ENCODE measurements at regions of chr10 and their contacts with region 1.

Region 1: DNA sequence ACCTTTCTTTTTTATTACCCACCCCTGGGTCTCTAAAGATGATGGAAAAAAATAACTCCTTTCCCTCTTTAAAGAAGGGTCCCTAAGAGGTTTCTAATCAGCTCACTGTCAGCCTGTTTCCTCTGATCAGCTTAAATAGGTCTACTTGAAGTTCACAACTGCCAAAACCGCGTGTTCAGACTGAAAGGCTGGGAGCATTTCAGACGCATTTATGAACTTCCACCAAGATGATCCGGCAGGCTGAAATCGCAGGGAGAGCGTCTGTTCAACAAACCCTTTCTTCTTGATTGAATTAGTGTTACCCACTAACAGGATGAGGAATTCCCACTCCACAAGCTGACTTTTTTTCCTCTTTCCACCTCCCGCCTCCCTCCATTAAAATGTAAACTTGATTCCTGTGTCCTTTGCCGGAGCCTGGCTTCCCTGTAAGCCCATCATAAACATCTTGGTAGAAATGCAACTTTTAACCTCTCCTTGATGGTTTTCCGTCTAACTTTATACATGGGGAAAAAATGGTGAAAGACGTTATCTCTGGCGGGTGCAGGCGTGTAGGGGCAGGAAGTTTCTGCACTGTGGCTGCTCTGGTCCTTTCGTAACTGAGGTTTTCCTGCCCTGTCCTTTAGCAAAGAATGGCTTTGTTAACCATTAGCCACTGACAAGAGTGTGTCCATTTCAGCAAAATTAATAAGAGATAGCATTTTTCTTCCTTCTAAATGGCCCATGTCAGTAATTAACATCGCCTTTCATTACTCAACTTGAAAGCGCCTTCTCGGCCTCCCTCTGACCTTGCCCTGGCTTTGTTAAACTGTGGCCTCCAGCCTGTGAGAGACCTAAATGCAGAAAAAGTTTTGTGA is 130.7 kb downstream of the BAMBI start:
- DNase-seq: no peak
- H3K4me3 ChIP-seq: peak overlapping the region; percentile 21 to 22
- H3K27ac ChIP-seq: peak overlapping the region; percentile 66 to 75
- H3K4me1 ChIP-seq: peaks cover 0 to 30% (median 11%) of the 10 kb centered on the region in 4 donors
- H3K27me3 ChIP-seq: no peaks in the 10 kb centered on the region
- CTCF ChIP-seq: no peak

Region 2: GRCh38 chr10:29501692-29502091 is 693.7 kb after region 1 on chr10:
- intact Hi-C with region 1: loop called (anchors 10 kb)
- DNase-seq: no peak
- H3K4me3 ChIP-seq: no peak overlapping the region
- H3K27ac ChIP-seq: no peak overlapping the region
- H3K4me1 ChIP-seq: peaks cover 0 to 5% (median 2%) of the 10 kb centered on the region in 4 donors
- H3K27me3 ChIP-seq: no peaks in the 10 kb centered on the region
- CTCF ChIP-seq: no peak

Measured in tibial artery (tissue), 4 donors.